ENCODE measurements at regions of chr1 and their contacts with region 1.

Region 1: GRCh38 chr1:36187800-36188593 is 32.0 kb downstream of the MAP7D1 start:
- DNase-seq: peak; percentile 87
- ATAC-seq: peak; percentile 98
- H3K4me3 ChIP-seq: no peak overlapping the region
- H3K4me3 Mint-ChIP-seq: no peak overlapping the region
- H3K27ac ChIP-seq: no peak overlapping the region
- H3K27ac Mint-ChIP-seq: peak overlapping the region; percentile 16
- H3K4me1 ChIP-seq: peaks cover 0 to 4% of the 10 kb centered on the region in 2 donors
- H3K4me1 Mint-ChIP-seq: peaks cover 3% of the 10 kb centered on the region
- H3K27me3 ChIP-seq: no peaks in the 10 kb centered on the region
- H3K27me3 Mint-ChIP-seq: no peaks in the 10 kb centered on the region
- CTCF ChIP-seq: peak; percentile 82

Region 2: GRCh38 chr1:36099681-36100341 is 88.2 kb before region 1 on chr1:
- CTCF ChIA-PET with region 1: interaction called, 15 read pairs
- POLR2A ChIA-PET with region 1: no interaction called
- intact Hi-C with region 1: no loop called
- DNase-seq: peak; percentile 81
- ATAC-seq: peak; percentile 86
- H3K4me3 ChIP-seq: peak overlapping the region in 1 of 5 experiments; percentile 9
- H3K4me3 Mint-ChIP-seq: no peak overlapping the region
- H3K27ac ChIP-seq: no peak overlapping the region
- H3K27ac Mint-ChIP-seq: no peak overlapping the region
- H3K4me1 ChIP-seq: peaks cover 0 to 7% of the 10 kb centered on the region in 2 donors
- H3K4me1 Mint-ChIP-seq: peaks cover 2% of the 10 kb centered on the region
- H3K27me3 ChIP-seq: no peaks in the 10 kb centered on the region
- H3K27me3 Mint-ChIP-seq: no peaks in the 10 kb centered on the region
- CTCF ChIP-seq: peak; percentile 93

Region 3: GRCh38 chr1:36134505-36135329 is 53.3 kb before region 1 on chr1:
- CTCF ChIA-PET with region 1: interaction called, 12 read pairs
- POLR2A ChIA-PET with region 1: no interaction called
- intact Hi-C with region 1: no loop called
- DNase-seq: peak; percentile 56
- ATAC-seq: peak; percentile 49
- H3K4me3 ChIP-seq: no peak overlapping the region
- H3K4me3 Mint-ChIP-seq: no peak overlapping the region
- H3K27ac ChIP-seq: no peak overlapping the region
- H3K27ac Mint-ChIP-seq: no peak overlapping the region
- H3K4me1 ChIP-seq: no peaks in the 10 kb centered on the region
- H3K4me1 Mint-ChIP-seq: no peaks in the 10 kb centered on the region
- H3K27me3 ChIP-seq: no peaks in the 10 kb centered on the region
- H3K27me3 Mint-ChIP-seq: no peaks in the 10 kb centered on the region
- CTCF ChIP-seq: peak; percentile 57

Region 4: GRCh38 chr1:36155408-36156328 is 32.3 kb before region 1 on chr1 and contains the start of gene MAP7D1:
- CTCF ChIA-PET with region 1: interaction called, 187 read pairs
- POLR2A ChIA-PET with region 1: interaction called, 27 read pairs
- intact Hi-C with region 1: no loop called
- DNase-seq: peak; percentile 94
- ATAC-seq: peak; percentile 81
- H3K4me3 ChIP-seq: peak within 1 kb of the TSS; percentile 70 to 97 (median 91)
- H3K4me3 Mint-ChIP-seq: peak within 1 kb of the TSS; percentile 91
- H3K27ac ChIP-seq: peak within 1 kb of the TSS; percentile 96
- H3K27ac Mint-ChIP-seq: peak within 1 kb of the TSS; percentile 95
- H3K4me1 ChIP-seq: peaks cover 54 to 60% of the 10 kb centered on the region in 2 donors
- H3K4me1 Mint-ChIP-seq: peaks cover 67% of the 10 kb centered on the region
- H3K27me3 ChIP-seq: no peaks in the 10 kb centered on the region
- H3K27me3 Mint-ChIP-seq: no peaks in the 10 kb centered on the region
- CTCF ChIP-seq: no peak
- total RNA-seq, gene MAP7D1: 65.2 and 66.4 TPM in 2 replicates

Region 5: DNA sequence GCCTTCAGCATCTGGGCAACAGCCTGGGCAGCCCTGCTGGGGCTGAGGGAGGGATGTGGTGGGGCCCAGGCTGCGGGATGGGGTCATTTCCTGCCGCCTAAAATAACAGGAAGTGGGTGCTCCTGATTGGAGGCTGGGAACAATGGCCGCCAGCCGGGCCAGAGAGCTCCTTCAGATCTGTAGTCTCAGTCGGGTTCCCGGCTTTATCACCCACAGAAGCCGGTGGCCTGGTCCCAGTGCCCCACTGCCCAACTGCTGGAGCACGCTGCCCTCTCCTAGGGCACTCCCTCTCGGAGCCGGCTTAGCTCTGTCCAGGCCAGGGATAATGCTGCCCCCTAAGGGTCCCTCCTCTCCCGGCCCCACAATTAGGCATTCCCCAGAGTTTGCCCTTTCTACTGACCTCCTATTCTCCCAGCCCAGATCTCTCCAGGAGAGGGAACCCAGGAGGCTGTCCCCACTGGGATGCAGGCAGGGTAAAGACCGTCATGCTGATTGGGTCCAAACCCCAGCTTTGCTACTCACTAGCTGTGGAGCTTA is 27.0 kb before region 1 on chr1:
- CTCF ChIA-PET with region 1: interaction called, 51 read pairs
- POLR2A ChIA-PET with region 1: no interaction called
- intact Hi-C with region 1: no loop called
- DNase-seq: peak; percentile 60
- ATAC-seq: peak; percentile 4
- H3K4me3 ChIP-seq: peak overlapping the region; percentile 12 to 51 (median 38)
- H3K4me3 Mint-ChIP-seq: peak overlapping the region; percentile 81
- H3K27ac ChIP-seq: peak overlapping the region; percentile 78 to 88
- H3K27ac Mint-ChIP-seq: peak overlapping the region; percentile 94
- H3K4me1 ChIP-seq: peaks cover 55 to 67% of the 10 kb centered on the region in 2 donors
- H3K4me1 Mint-ChIP-seq: peaks cover 68% of the 10 kb centered on the region
- H3K27me3 ChIP-seq: no peaks in the 10 kb centered on the region
- H3K27me3 Mint-ChIP-seq: no peaks in the 10 kb centered on the region
- CTCF ChIP-seq: no peak

Region 6: DNA sequence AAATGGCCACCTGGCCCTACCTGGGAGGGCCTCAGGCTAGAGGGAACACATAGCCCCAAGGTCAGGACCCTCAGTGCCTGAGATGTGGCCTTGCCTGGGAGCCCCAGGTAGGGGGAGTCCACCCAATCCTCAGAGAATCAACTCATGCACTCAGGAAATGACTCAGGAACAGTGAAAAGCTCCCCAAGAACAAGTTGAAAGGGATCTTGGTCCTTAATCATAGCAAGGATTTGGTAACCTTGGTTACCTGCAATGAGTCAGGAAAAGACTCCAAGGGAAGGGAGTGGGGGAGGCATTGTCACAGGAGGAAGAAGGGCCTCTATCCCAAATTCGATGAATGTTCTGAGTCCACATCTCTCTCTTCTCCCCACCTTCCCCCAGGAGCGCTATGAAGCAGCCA is 15.0 kb before region 1 on chr1:
- CTCF ChIA-PET with region 1: interaction called, 10 read pairs
- POLR2A ChIA-PET with region 1: no interaction called
- intact Hi-C with region 1: no loop called
- DNase-seq: no peak
- ATAC-seq: no peak
- H3K4me3 ChIP-seq: no peak overlapping the region
- H3K4me3 Mint-ChIP-seq: no peak overlapping the region
- H3K27ac ChIP-seq: no peak overlapping the region
- H3K27ac Mint-ChIP-seq: no peak overlapping the region
- H3K4me1 ChIP-seq: peaks cover 11 to 13% of the 10 kb centered on the region in 2 donors
- H3K4me1 Mint-ChIP-seq: peaks cover 19% of the 10 kb centered on the region
- H3K27me3 ChIP-seq: no peaks in the 10 kb centered on the region
- H3K27me3 Mint-ChIP-seq: no peaks in the 10 kb centered on the region
- CTCF ChIP-seq: no peak

Region 7: DNA sequence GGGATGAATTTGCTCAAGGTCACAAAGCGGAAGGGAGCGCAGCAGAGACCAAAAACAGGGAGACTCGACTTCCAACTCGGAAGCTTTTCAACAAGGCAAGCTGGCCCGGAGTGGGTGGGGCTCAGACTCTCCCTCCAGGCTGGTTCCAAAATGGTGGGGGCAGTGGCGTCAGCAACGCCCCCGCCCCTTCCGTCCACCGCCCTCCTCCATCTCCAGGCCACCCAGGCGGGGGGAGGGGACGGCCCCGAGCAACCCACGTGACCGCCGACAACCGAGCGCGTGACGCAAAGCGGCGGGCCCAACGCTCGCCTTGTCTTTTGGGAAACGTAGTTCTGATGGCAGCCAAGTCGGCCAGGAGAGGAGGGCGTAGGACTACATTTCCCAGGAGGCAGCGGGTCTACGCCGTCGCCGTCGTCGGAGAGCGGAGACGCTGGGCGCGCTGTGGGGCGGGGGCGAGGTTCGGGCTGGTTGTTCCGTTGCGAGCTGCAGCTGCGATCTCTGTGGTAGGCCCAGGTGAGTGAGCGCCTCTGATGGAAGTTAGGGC is 36.1 kb after region 1 on chr1 and contains the start of gene THRAP3:
- CTCF ChIA-PET with region 1: interaction called, 23 read pairs
- POLR2A ChIA-PET with region 1: interaction called, 6 read pairs
- intact Hi-C with region 1: loop called (anchors 1 kb)
- DNase-seq: peak; percentile 100
- ATAC-seq: peak; percentile 88
- H3K4me3 ChIP-seq: peak within 1 kb of the TSS; percentile 77 to 98 (median 91)
- H3K4me3 Mint-ChIP-seq: peak within 1 kb of the TSS; percentile 98
- H3K27ac ChIP-seq: peak within 1 kb of the TSS; percentile 95 to 100
- H3K27ac Mint-ChIP-seq: peak within 1 kb of the TSS; percentile 100
- H3K4me1 ChIP-seq: peaks cover 22 to 43% of the 10 kb centered on the region in 2 donors
- H3K4me1 Mint-ChIP-seq: peaks cover 34% of the 10 kb centered on the region
- H3K27me3 ChIP-seq: no peaks in the 10 kb centered on the region
- H3K27me3 Mint-ChIP-seq: no peaks in the 10 kb centered on the region
- CTCF ChIP-seq: no peak
- total RNA-seq, gene THRAP3: 153 and 159 TPM in 2 replicates

Region 8: GRCh38 chr1:37859507-37860345 is 1671.7 kb after region 1 on chr1 and contains the start of gene MTF1:
- CTCF ChIA-PET with region 1: no interaction called
- POLR2A ChIA-PET with region 1: no interaction called
- intact Hi-C with region 1: no loop called
- DNase-seq: peak; percentile 98
- ATAC-seq: peak; percentile 98
- H3K4me3 ChIP-seq: peak within 1 kb of the TSS; percentile 72 to 100 (median 95)
- H3K4me3 Mint-ChIP-seq: peak within 1 kb of the TSS; percentile 97
- H3K27ac ChIP-seq: peak within 1 kb of the TSS; percentile 79 to 95
- H3K27ac Mint-ChIP-seq: peak within 1 kb of the TSS; percentile 94
- H3K4me1 ChIP-seq: peaks cover 16 to 18% of the 10 kb centered on the region in 2 donors
- H3K4me1 Mint-ChIP-seq: peaks cover 33% of the 10 kb centered on the region
- H3K27me3 ChIP-seq: no peaks in the 10 kb centered on the region
- H3K27me3 Mint-ChIP-seq: no peaks in the 10 kb centered on the region
- CTCF ChIP-seq: peak; percentile 94
- total RNA-seq, gene MTF1: 34.6 and 36.7 TPM in 2 replicates

Measured in B cell (primary cell).